ENCODE measurements at regions of chr22 and their contacts with region 1.

Region 1: DNA sequence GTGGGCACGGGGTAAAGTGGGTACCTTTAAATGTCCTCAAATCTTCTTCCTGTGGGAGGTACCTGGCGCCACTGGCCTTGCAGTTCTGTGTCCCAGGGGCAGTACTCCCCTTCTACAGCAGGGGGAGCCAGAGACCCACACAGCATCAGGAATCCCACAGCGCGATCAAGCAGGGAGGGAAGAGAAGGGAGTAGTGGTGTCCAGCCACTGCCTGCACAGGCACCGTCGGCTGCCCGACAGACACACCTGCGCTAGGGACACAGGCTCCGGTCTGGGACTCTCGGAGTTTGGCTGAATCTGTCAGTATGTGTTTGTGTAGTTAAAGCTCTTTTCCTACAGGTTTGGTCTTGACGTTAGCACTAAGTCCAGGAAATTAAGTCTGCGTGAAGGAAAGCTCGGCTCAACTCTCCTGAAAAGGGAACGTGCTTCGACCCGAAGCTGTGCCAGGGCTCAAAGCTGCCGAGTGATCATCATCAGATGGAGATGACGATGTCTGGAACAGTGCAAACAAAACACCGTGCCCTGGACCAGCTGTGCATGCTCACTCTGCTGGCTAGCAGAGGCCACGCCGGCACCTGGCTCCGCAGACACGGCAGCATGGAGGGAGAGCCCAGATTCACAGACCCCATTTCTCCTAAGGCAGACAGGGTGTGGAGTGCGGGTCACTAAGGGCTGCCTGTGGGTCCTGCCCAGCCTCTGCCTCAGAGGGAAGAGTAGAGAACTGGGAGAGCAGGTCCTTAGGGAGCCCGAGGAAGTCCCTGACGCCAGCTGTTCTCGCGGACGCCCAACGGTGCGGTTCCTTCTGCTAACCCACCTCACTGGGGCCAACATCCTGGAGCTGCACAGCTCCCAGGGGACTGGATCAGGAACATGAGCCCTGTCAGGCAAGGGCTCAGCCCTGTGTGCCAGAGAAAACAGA is 56.0 kb upstream of the BID start:
- ATAC-seq: peak; percentile 89 to 99 (median 92)
- H3K4me3 ChIP-seq: no peak overlapping the region
- H3K27ac ChIP-seq: no peak overlapping the region
- H3K4me1 ChIP-seq: peaks cover 6 to 12% of the 10 kb centered on the region in 2 donors

Region 2: DNA sequence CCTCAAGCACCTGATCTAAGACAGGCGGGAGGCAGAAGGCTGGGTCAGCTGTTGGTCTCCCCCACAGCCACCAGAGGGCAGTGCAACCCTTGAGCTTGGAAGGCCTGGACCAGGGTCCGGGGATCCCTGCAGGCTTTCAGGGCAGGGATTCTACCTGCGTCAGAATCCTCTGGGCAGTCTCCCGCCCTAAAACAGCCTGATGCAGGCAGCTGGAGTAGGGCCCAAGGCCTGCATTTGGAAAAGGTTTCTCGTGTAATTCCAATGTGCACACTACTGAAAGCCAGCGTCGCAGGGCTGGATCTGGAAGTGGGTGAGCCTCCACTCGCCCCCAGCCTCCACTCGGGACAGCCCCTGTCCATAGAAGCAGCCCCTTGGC is 87.8 kb before region 1 on chr22:
- in situ Hi-C with region 1: loop called in 1 of 9 experiments (anchors 25 kb)
- ATAC-seq: peak; percentile 86 to 98 (median 96)
- H3K4me3 ChIP-seq: no peak overlapping the region
- H3K27ac ChIP-seq: no peak overlapping the region
- H3K4me1 ChIP-seq: peaks cover 0 to 3% of the 10 kb centered on the region in 2 donors

Region 3: GRCh38 chr22:17773606-17774205 is 56.6 kb before region 1 on chr22:
- in situ Hi-C with region 1: no loop called
- ATAC-seq: peak; percentile 46 to 86 (median 82)
- H3K4me3 ChIP-seq: peak overlapping the region; percentile 36 to 46 (median 38)
- H3K27ac ChIP-seq: peak overlapping the region; percentile 78 to 84
- H3K4me1 ChIP-seq: peaks cover 17 to 20% of the 10 kb centered on the region in 2 donors

Region 4: DNA sequence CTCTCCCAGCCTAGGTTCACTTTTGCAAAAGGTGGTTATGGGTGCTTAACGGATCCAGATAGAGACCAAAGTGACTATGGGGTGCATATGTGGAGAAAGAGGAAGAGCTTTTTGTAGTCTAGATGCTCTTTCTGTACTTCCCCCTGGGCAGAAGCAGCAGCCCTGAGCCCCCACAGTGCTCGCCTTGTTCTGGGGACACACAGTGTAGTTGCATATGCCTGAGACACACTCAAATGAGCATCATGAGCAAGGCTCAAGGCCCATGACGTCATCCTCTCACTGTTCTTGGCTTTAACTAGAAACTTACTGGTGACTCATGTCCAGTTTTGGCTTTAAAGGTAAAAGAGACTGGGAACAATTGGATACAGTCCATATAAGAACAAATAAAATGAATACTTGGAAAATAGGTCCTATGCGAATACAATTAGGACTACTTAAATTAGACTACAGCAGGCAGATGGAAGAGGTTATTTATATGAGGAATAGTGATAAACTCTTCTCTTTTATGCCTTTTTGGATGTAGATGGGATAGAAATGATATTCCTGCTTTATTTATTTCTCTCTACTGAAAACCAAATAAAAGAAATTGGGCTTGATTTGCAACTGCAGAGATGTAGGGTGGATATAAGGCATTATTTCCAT is 227.4 kb after region 1 on chr22:
- in situ Hi-C with region 1: loop called in 2 of 9 experiments (anchors 10 to 25 kb)
- ATAC-seq: peak in 6 of 8 experiments; percentile 14 to 59 (median 37)
- H3K4me3 ChIP-seq: no peak overlapping the region
- H3K27ac ChIP-seq: no peak overlapping the region
- H3K4me1 ChIP-seq: peaks cover 5 to 21% of the 10 kb centered on the region in 2 donors

Region 5: DNA sequence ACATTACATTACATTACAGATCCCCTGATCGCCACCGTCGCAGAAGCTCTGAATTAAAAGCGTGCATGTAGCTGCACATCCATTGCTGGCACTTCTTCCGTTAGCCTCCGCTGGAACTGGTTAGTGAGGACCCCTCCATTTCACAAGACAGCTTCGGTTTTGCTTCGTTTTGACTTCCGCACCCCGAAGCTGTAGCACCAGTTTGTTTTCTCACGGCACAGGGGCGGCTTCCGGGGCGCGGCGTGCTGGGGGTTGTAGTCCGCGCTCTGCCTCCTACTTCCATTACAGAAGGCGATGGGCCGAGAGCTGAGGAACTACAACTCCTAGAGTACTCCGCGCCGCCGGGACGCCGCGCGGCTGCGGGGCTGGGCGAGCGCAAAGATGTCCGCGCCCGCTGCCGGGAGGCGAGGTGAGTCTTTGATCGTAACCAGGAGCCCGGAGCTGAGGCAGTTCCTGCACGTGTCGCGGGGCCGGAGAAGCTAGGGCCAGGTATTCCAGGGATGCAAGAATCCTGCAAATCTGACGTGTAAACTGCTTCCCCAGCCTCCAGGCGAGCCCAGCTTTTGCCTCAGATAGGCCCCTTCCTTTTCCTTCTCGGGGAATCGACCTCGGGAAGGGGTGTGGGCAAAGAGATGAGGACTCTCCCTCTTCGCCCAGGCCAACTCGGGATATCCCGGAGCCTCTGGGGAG is 247.5 kb after region 1 on chr22 and contains the start of gene PEX26:
- in situ Hi-C with region 1: loop called in 6 of 9 experiments (anchors 10 to 25 kb)
- ATAC-seq: peak; percentile 95 to 100 (median 99)
- H3K4me3 ChIP-seq: peak within 1 kb of the TSS; percentile 55 to 91 (median 68)
- H3K27ac ChIP-seq: peak within 1 kb of the TSS; percentile 22 to 73
- H3K4me1 ChIP-seq: peaks cover 16 to 18% of the 10 kb centered on the region in 2 donors
- total RNA-seq, gene PEX26: 10.5 to 25.1 (median 19.4) TPM